ENCODE measurements at regions of chr1 and their contacts with region 1.

Region 1: DNA sequence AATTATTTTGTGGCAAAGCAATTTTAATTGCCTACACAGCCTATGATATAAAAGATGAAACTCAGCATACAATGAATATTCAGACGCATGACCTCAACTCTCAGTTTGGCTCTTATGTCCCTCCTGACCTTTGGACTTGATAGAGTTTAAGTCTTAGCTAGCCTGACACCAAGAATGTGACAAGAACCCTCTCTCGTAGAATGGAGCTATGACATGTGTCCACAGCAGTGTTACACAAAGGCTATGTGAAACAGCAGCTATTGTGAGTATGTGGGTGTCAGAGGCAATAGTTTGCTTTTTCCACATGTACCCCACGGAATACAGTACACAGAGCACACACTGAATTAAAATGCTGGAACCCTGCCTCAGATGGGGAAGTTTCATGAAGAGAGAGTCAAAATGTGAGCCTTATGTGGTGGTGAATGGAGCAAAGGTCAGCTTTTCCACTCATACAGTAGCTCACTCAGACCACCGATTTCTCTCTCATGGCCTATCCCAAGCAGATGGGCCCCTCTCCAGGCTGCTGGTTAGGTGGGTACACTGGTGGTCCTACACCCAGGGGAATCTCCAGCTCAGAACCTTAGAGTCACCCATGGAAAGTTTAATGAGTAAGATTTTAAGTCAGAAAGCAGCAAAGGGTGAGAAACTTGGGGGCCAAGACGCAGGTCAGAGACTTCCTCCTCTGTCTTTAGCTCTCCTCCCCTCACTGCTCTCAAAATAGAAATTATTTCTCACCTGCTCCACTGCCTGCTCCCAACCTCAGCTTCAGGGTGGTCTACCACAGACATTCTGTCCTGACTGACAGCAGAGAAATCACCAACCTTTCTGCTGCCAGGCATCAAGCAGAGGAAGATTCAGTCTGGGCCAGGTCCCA is 10.1 kb upstream of the XCL2 start:
- DNase-seq: no peak
- H3K4me3 Mint-ChIP-seq: no peak overlapping the region
- H3K27ac Mint-ChIP-seq: no peak overlapping the region
- H3K4me1 Mint-ChIP-seq: peaks cover 34% of the 10 kb centered on the region
- H3K27me3 Mint-ChIP-seq: peaks cover 7% of the 10 kb centered on the region

Region 2: DNA sequence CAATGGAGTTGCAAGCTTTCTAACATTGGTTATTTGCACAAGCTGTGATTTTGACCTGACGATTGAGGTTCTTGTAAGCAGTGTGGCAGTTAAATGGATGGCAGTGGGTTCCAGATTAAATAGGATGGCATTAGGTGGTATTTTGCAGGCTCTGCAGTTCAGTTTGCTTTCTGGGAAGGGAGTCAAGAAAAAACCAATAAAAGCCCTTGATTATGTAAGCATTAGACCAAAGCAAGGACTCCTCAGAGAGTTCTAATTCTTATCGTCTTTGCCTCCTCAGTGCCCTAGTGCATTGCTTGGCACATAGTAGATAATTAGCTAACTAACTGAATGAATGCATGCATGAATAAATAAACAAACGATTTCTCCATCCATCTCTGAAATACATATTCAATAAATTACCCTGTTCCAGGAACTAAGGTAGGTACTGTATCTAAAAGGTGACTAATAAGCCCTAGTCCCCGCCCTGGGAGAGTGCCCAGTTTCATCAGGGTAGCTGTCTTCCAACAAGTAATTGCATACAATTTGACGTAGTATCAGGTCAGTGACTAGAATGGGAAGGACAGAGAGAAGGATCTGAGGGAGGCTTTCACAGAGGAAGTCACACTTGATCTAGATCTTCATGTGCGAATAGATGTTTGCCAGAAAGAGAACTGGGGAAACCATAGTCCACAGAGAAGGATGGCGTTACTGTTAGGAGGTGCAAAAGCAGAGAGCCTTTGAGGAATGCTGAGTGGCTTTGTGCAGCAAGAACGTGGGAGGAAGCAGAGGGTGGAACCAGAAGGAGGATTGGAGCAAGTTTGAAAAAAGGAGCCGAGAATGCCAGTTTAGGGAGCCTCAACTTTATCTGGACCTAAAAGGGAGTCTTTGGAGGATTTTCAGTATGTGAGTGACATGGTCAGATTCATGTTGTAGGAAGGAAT is 161.9 kb before region 1 on chr1:
- intact Hi-C with region 1: no loop called
- DNase-seq: no peak
- H3K4me3 Mint-ChIP-seq: no peak overlapping the region
- H3K27ac Mint-ChIP-seq: no peak overlapping the region
- H3K4me1 Mint-ChIP-seq: peaks cover 28% of the 10 kb centered on the region
- H3K27me3 Mint-ChIP-seq: peaks cover 30% of the 10 kb centered on the region

Region 3: GRCh38 chr1:168907053-168907452 is 353.1 kb after region 1 on chr1:
- intact Hi-C with region 1: loop called (anchors 5 kb)
- DNase-seq: no peak
- H3K4me3 Mint-ChIP-seq: no peak overlapping the region
- H3K27ac Mint-ChIP-seq: no peak overlapping the region
- H3K4me1 Mint-ChIP-seq: no peaks in the 10 kb centered on the region
- H3K27me3 Mint-ChIP-seq: peaks cover 3% of the 10 kb centered on the region

Region 4: GRCh38 chr1:169148472-169149252 is 594.7 kb after region 1 on chr1:
- intact Hi-C with region 1: no loop called
- DNase-seq: no peak
- H3K4me3 Mint-ChIP-seq: no peak overlapping the region
- H3K27ac Mint-ChIP-seq: no peak overlapping the region
- H3K4me1 Mint-ChIP-seq: no peaks in the 10 kb centered on the region
- H3K27me3 Mint-ChIP-seq: peaks cover 8% of the 10 kb centered on the region

Measured in activated T-helper 1 cell treated with anti-CD3 and anti-CD28 coated beads, Interleukin-12 subunit alpha, Interleukin-12 subunit beta, Interleukin-2, Interleukin-4 antibody, amounts not matched to agents 30 ng/mL and 10 ng/mL and 1 ng/mL, durations not matched to agents 14 hours and 24 hours and 36 hours (primary cell).